Activated T-helper 1 cell treated with anti-CD3 and anti-CD28 coated beads, Interleukin-12 subunit alpha, Interleukin-12 subunit beta, Interleukin-2, Interleukin-4 antibody, amounts not matched to agents 30 ng/mL and 10 ng/mL and 1 ng/mL, durations not matched to agents 14 hours and 24 hours and 36 hours (primary cell): ENCODE measurements at regions of chr1 and their contacts with region 1.

Region 1: GRCh38 chr1:221994274-221994698 is 252.4 kb upstream of the DUSP10 start:
- DNase-seq: no peak
- H3K4me3 Mint-ChIP-seq: no peak overlapping the region
- H3K27ac Mint-ChIP-seq: peak overlapping the region; percentile 77
- H3K4me1 Mint-ChIP-seq: peaks cover 40% of the 10 kb centered on the region
- H3K27me3 Mint-ChIP-seq: peaks cover 2% of the 10 kb centered on the region

Region 2: GRCh38 chr1:221725735-221726672 is 268.3 kb before region 1 on chr1:
- intact Hi-C with region 1: loop called (anchors 1 kb)
- DNase-seq: no peak
- H3K4me3 Mint-ChIP-seq: peak overlapping the region; percentile 55
- H3K27ac Mint-ChIP-seq: peak overlapping the region; percentile 92
- H3K4me1 Mint-ChIP-seq: peaks cover 87% of the 10 kb centered on the region
- H3K27me3 Mint-ChIP-seq: no peaks in the 10 kb centered on the region

Region 3: GRCh38 chr1:221753828-221754188 is 240.5 kb before region 1 on chr1:
- intact Hi-C with region 1: loop called (anchors 1 kb)
- DNase-seq: no peak
- H3K4me3 Mint-ChIP-seq: peak overlapping the region; percentile 59
- H3K27ac Mint-ChIP-seq: peak overlapping the region; percentile 82
- H3K4me1 Mint-ChIP-seq: peaks cover 69% of the 10 kb centered on the region
- H3K27me3 Mint-ChIP-seq: no peaks in the 10 kb centered on the region

Region 4: DNA sequence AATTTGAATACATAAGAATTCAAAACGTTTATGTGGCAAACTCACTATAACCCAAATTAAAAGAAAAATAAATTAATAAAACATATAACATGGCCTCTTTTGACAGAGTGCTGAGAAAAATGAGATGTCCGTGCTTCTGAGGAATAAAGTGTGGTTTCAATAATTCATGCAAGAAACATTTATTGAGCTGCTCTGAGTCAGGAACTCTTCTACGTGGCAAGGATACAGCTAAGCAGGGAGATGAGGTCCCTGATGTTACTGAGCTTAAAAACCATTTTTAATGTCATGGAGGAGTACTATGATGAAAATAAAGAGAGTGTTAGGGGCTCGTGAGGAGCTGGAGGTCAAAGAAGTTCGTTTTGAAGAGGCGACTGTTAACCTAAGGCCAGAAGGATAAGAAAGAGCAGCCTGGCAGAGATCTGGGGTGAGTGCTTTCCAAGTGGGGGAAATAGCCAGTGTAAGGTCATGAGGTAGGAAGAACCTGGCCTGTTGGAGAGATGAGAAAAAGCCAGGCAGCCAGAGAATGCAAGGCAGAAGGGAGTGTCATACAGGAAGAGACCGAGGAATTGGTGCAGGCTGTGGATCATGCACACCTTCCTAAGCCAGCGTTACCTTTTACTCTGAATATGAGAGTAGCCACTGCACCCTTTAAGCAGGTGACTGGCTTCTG is 70.2 kb before region 1 on chr1:
- intact Hi-C with region 1: no loop called
- DNase-seq: no peak
- H3K4me3 Mint-ChIP-seq: no peak overlapping the region
- H3K27ac Mint-ChIP-seq: no peak overlapping the region
- H3K4me1 Mint-ChIP-seq: peaks cover 4% of the 10 kb centered on the region
- H3K27me3 Mint-ChIP-seq: peaks cover 4% of the 10 kb centered on the region

Region 5: DNA sequence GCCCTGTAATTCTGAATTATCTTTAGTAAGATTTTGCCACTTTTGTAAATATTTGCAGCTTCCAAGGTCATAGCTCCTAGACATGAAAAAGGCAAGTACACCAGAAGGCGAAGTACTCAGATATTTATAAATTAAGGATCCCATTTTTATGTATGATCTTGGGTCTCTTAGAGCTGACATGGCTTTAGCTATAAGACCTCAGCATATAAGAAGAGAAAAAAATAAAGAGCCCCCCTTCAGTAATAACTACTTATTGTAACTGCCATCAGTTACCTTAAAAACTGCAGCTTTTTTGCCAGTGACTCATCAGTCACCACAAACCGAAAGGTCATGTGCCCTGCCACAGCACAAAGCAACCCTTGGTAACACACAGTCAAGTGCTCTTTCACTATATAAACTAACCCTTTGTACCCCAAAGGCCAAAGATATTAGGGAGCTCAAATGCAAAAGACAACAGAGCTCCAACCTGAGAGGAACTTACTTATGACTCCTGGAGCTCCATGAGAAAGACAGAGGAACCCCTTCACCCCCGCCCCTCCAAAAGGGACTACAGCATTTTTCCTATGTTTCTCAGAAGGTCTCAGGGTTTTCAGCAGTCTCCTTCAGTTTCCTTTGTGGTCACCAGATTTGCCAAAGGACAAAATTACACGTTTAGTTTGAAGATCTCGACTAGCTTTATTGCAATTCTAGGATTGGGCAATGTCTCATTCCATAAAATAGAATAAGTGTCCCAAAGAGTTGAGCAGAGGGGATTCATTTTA is 32.6 kb before region 1 on chr1:
- intact Hi-C with region 1: loop called (anchors 1 kb)
- DNase-seq: peak; percentile 38
- H3K4me3 Mint-ChIP-seq: peak overlapping the region; percentile 23
- H3K27ac Mint-ChIP-seq: no peak overlapping the region
- H3K4me1 Mint-ChIP-seq: peaks cover 16% of the 10 kb centered on the region
- H3K27me3 Mint-ChIP-seq: peaks cover 4% of the 10 kb centered on the region

Region 6: GRCh38 chr1:222009105-222009730 is 14.9 kb after region 1 on chr1:
- intact Hi-C with region 1: loop called (anchors 2 kb)
- DNase-seq: peak; percentile 10
- H3K4me3 Mint-ChIP-seq: no peak overlapping the region
- H3K27ac Mint-ChIP-seq: no peak overlapping the region
- H3K4me1 Mint-ChIP-seq: peaks cover 4% of the 10 kb centered on the region
- H3K27me3 Mint-ChIP-seq: peaks cover 18% of the 10 kb centered on the region